WTC11 (cell line): ENCODE measurements at regions of chr16 and their contacts with region 1.

Region 1: GRCh38 chr16:4271176-4272066 is 1.4 kb downstream of the TFAP4 start:
- DNase-seq: peak; percentile 94
- ATAC-seq: peak; percentile 75
- H3K4me3 Mint-ChIP-seq: peak overlapping the region; percentile 69
- H3K27ac Mint-ChIP-seq: peak overlapping the region; percentile 80
- H3K4me1 Mint-ChIP-seq: peaks cover 14% of the 10 kb centered on the region
- H3K27me3 Mint-ChIP-seq: no peaks in the 10 kb centered on the region
- CTCF ChIP-seq: no peak

Region 2: GRCh38 chr16:4293822-4294457 is 22.5 kb after region 1 on chr16:
- CTCF ChIA-PET with region 1: interaction called, 33 read pairs
- POLR2A ChIA-PET with region 1: interaction called, 17 read pairs
- DNase-seq: peak; percentile 81
- ATAC-seq: peak; percentile 91
- H3K4me3 Mint-ChIP-seq: peak overlapping the region; percentile 59
- H3K27ac Mint-ChIP-seq: peak overlapping the region; percentile 97
- H3K4me1 Mint-ChIP-seq: peaks cover 37% of the 10 kb centered on the region
- H3K27me3 Mint-ChIP-seq: no peaks in the 10 kb centered on the region
- CTCF ChIP-seq: no peak

Region 3: DNA sequence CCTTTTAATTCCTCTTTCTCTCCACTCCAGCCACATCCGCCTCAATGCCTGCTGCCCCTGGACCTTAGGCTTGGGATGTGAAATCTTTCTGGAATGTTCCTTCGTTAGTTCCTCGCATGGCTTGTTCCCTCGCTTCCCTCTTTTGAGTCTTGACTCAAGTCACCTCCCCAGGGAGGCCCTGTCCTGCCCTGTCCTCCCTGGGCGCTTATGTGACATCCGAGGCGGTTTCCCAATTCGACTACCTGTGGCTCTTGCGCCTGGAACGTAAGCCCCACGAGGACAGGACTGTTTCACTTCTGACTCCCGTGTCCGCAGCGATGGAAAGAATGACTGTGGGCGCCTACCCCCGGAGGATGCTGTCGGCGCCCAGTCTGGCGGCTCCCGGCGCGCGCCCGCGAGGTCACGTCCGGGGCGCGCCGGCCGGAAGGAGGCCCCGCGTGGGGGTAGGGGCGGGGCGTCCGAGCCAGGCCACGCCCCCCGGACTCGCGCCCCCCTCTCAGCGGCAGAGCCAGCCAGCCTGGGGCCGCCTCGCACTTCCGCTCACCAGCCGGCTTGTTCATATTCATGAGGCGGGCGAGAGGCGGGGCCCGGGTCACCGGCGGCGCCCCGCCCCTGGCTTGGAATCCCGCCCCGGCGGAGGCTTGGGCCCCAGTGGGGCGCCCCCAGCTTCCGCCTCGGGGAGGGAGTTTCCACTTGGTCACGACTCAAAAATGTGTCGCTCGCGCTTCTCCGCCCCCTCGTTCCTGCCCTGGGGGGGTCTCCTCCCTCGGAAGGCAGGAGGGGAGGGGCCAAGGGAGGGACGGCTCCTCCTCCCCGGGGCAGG is 36.0 kb after region 1 on chr16:
- CTCF ChIA-PET with region 1: interaction called, 35 read pairs
- POLR2A ChIA-PET with region 1: interaction called, 15 read pairs
- DNase-seq: peak; percentile 94
- ATAC-seq: peak; percentile 78
- H3K4me3 Mint-ChIP-seq: peak overlapping the region; percentile 96
- H3K27ac Mint-ChIP-seq: peak overlapping the region; percentile 97
- H3K4me1 Mint-ChIP-seq: peaks cover 39% of the 10 kb centered on the region
- H3K27me3 Mint-ChIP-seq: no peaks in the 10 kb centered on the region; the same call in 1 of the 2 replicates
- CTCF ChIP-seq: no peak

Region 4: DNA sequence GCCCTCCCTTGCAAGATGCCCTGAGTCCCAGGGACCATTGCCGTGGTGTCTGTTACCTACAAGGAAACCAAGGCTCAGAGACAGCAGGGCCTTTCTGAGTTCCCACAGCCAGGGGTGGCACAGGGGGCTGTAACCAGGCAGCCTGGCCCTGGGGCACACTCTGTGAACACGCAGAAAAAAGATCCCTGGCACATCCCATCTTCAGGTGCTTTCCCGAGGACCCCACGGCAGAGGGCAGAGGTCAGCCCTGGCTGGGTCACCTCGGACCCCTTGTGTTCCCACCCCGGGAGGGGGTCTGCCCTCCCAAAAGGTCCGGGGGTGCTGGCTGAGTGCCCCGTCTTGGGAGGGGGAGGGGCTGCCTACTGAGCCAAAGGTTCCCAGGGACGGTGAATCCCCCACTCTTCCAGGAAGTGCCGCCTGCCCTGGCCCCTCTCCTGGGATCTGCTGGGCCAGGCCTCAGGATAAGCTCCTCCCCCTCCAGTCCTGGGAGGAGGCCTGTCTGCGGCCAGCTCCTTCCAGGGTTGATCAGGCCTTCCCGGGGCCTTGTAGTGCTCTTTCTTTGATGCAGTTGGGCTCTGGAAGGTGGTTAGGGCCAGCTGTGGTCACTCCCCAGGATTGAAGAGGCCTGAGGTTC is 52.5 kb after region 1 on chr16:
- CTCF ChIA-PET with region 1: interaction called, 61 read pairs
- POLR2A ChIA-PET with region 1: interaction called, 12 read pairs
- DNase-seq: peak; percentile 68
- ATAC-seq: peak; percentile 75
- H3K4me3 Mint-ChIP-seq: no peak overlapping the region
- H3K27ac Mint-ChIP-seq: peak overlapping the region; percentile 93
- H3K4me1 Mint-ChIP-seq: peaks cover 29% of the 10 kb centered on the region
- H3K27me3 Mint-ChIP-seq: no peaks in the 10 kb centered on the region
- CTCF ChIP-seq: no peak

Region 5: DNA sequence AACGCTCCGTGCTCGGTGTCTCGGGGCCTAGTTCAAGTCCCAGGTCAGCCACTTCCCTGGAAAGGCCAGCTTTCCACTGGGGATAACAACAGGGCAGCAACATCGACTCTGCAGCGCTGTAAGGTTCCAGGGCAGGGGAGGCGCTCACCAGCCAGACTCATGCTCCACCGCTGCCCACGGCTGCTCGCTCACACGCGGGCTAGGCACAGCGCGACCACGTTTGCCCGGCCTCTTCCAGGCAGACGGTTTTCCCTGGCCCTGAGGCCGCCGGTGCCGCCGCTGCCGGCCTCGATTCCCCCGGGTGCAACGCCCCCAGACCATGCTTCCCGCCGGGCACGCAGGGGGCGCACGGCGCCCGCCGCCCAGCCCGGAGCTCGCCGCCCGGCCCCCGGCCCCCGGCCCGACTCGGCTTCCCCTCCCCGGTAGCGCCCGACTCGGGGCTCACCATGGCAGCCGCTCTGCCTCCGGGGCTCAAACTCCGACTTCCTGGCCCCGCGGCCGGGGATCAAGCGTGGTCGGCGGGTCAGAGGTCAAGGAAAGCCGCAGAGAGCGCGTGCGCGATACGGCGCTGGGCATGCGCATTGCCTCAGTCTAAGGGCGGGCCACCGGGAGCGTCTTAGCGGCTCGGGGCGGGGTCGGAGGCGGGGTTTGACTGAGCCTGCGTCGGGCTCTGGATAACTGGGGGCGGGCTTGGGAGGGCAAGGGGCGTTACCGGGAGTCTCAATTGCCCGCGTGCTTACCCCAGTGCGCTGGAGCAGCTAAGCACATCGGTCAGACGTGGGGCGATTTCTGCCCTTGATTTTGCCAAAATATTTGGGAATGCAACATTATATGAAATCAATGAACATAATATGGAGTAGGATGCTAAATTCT is 79.6 kb after region 1 on chr16 and contains the start of gene PAM16:
- CTCF ChIA-PET with region 1: interaction called, 5 read pairs
- POLR2A ChIA-PET with region 1: interaction called, 11 read pairs
- DNase-seq: peak; percentile 99
- ATAC-seq: peak; percentile 96
- H3K4me3 Mint-ChIP-seq: peak within 1 kb of the TSS; percentile 95
- H3K27ac Mint-ChIP-seq: peak within 1 kb of the TSS; percentile 70
- H3K4me1 Mint-ChIP-seq: peaks cover 11% of the 10 kb centered on the region
- H3K27me3 Mint-ChIP-seq: 0 out of 2 replicates have a peak, but pooled peaks cover 3% of the 10 kb centered on the region
- CTCF ChIP-seq: no peak
- total RNA-seq, gene PAM16: 87.2 to 93.7 TPM (median 88.9 TPM) in 3 replicates

Region 6: DNA sequence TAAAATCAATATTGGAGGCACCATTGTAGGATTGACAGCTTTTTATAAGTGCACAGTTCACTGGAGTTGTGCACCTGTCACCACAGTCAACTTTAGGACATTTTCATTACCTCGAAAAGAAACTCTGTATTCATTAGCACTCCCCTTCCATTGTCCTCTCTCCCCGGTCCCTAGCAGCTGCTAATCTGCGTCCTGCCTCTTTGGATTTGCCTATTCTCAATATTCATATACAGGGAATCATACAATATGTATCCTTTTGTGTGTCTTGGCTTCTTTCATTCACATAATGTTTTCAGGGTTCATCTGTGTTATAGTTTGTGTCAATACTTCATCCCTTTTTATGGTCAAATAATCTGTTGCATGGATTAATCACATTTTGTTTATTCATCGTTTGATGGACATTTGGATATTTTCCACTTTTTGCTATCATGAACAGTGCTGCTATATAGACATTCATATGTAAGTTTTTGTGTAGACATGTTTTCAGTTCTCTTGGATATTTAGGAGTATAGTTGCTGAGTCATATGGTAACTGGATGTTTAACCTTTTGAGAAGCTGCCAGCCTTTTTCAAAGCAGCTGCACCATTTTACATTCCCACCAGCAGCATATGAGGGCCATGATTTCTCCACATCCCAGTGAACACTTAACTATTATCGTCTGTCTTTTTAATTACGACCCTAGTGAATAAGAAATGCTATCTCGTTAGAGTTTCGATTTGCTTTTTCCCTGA is 164.1 kb after region 1 on chr16:
- CTCF ChIA-PET with region 1: no interaction called
- POLR2A ChIA-PET with region 1: no interaction called
- DNase-seq: no peak
- ATAC-seq: no peak
- H3K4me3 Mint-ChIP-seq: no peak overlapping the region
- H3K27ac Mint-ChIP-seq: no peak overlapping the region
- H3K4me1 Mint-ChIP-seq: no peaks in the 10 kb centered on the region
- H3K27me3 Mint-ChIP-seq: no peaks in the 10 kb centered on the region
- CTCF ChIP-seq: no peak